ENCODE measurements at regions of chr2 and their contacts with region 1.

Region 1: GRCh38 chr2:48114256-48114655 is 208.0 kb upstream of the FBXO11 start:
- DNase-seq: peak; percentile 79
- ATAC-seq: peak; percentile 3; the same call in 1 of the 2 replicates
- H3K4me3 ChIP-seq: no peak overlapping the region
- H3K27ac ChIP-seq: peak overlapping the region; percentile 90
- H3K4me1 ChIP-seq: peaks cover 48% of the 10 kb centered on the region
- H3K27me3 ChIP-seq: no peaks in the 10 kb centered on the region
- CTCF ChIP-seq: no peak

Region 2: GRCh38 chr2:48126162-48126561 is 11.9 kb after region 1 on chr2:
- CTCF ChIA-PET with region 1: no interaction called
- POLR2A ChIA-PET with region 1: no interaction called
- intact Hi-C with region 1: no loop called
- DNase-seq: no peak
- ATAC-seq: no peak
- H3K4me3 ChIP-seq: no peak overlapping the region
- H3K27ac ChIP-seq: no peak overlapping the region
- H3K4me1 ChIP-seq: peaks cover 7% of the 10 kb centered on the region; the same call in 1 of the 2 replicates
- H3K27me3 ChIP-seq: no peaks in the 10 kb centered on the region
- CTCF ChIP-seq: no peak

Region 3: DNA sequence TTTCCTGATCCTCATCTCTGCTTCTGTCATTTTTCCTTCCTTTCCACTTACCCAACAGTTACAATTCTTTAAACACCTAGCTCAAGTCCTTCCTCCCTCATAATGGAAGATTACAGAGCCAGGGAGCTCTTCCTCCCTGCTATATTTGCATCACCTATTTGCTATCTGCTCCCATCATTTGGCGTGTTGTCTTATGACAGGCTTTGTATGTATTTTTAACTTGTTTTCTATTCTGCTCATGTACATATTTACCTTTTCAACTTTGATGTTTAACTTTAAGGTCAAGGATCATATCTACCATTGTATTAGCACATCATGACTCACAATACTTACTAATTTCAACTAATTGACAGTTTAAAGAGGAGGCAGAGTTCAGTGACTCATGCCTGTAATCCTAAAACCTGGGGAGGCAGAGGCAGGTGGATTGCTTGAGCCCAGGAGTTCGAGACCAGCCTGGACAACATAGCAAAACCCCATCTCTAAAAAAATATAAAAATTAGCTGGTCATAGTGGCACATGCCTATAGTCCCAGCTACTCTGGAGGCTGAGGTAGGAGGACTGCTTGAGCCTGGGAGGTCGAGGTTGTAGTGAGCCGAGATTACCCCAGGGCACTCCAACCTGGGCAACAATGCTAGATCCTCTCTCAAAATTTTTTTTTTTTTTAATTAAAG is 107.7 kb after region 1 on chr2:
- CTCF ChIA-PET with region 1: no interaction called
- POLR2A ChIA-PET with region 1: no interaction called
- intact Hi-C with region 1: loop called (anchors 1 kb)
- DNase-seq: peak; percentile 87
- ATAC-seq: peak; percentile 90
- H3K4me3 ChIP-seq: no peak overlapping the region
- H3K27ac ChIP-seq: 0 out of 2 replicates have a peak overlapping the region, but pooled peaks have one; percentile 10
- H3K4me1 ChIP-seq: peaks cover 5% of the 10 kb centered on the region; the same call in 1 of the 2 replicates
- H3K27me3 ChIP-seq: no peaks in the 10 kb centered on the region
- CTCF ChIP-seq: no peak

Region 4: GRCh38 chr2:48312126-48312525 is 197.9 kb after region 1 on chr2:
- CTCF ChIA-PET with region 1: interaction called, 3 read pairs
- POLR2A ChIA-PET with region 1: no interaction called
- intact Hi-C with region 1: loop called (anchors 1 kb)
- DNase-seq: peak; percentile 96
- ATAC-seq: no peak
- H3K4me3 ChIP-seq: no peak overlapping the region
- H3K27ac ChIP-seq: peak overlapping the region; percentile 78
- H3K4me1 ChIP-seq: peaks cover 29% of the 10 kb centered on the region
- H3K27me3 ChIP-seq: no peaks in the 10 kb centered on the region
- CTCF ChIP-seq: no peak

Measured in PC-3 (cell line).